ENCODE measurements at regions of chr7 and their contacts with region 1.

Region 1: DNA sequence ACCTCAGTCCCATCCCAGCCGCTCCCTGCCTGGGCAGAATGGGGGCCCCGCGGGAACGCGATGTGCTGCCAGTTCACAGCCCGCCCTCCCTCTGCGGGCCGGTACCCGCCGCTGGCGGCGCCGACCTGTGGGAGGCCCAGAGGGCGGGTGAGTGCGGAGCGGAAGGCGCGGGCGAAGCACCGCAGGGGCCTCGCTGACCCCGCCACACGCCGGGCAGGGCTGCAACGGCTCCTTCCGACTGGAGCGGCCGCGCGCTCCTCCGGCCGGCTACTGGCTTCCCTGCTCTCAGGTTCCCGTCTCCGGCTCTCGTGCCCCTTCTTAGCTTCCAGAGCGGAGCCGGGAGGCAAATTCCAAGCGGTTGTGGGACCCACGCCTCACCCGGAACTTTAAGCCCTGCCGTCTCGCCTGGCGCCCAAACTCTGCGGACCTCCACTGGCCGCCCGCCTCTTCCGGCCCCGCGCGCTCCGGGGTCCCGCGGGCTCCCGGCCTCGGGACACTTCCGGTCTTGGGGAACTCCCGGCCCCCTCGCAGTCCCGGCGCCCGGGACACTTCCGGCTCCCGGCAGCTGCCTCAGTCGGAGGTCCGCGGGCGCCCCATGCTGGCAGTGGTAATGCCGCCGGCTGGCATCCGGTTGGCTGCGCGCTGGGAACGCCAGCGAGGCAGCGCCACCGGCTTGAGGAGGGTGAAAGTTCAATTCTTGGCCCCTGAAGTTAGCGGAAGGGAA is at the start of gene CYREN:
- DNase-seq: peak; percentile 95 to 97 (median 96)
- H3K4me3 ChIP-seq: peak within 1 kb of the TSS; percentile 5 to 78 (median 56)
- H3K27ac ChIP-seq: peak within 1 kb of the TSS; percentile 77 to 97 (median 91)
- H3K4me1 ChIP-seq: peaks cover 0 to 30% of the 10 kb centered on the region in 2 donors
- H3K27me3 ChIP-seq: no peaks in the 10 kb centered on the region
- CTCF ChIP-seq: peak; percentile 54 to 82 (median 65)
- POLR2A ChIP-seq: peak; percentile 34 to 83
- total RNA-seq, gene CYREN: 35.0 to 66.2 (median 51.6) TPM

Region 2: DNA sequence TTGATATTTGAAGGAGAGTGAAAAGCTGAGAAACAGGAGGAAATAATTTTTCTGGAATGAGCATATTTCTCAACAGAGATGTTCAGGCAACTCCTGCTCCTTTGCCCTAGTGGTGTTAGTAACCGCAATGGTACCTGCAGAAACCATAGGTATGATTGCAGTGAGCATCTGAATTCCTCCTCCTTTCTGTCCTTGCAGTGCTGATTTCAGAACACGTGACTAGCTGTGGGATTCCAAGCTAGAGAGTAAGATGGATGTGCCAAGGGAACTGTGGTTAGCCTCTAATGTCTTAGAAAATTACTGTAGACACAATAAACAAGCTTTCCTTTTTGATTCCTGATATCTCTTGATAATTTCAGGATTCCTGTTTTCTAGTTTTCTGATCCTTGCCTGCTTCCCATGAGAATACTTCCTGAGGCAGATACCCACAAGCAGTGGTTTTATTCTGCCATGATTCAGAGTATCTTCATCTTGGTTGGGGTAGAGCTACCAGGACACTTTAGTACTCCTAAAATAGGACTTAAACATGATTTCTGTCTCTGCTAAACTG is 1015.8 kb before region 1 on chr7:
- intact Hi-C with region 1: no loop called
- DNase-seq: no peak
- H3K4me3 ChIP-seq: no peak overlapping the region
- H3K27ac ChIP-seq: no peak overlapping the region
- H3K4me1 ChIP-seq: no peaks in the 10 kb centered on the region
- H3K27me3 ChIP-seq: no peaks in the 10 kb centered on the region
- CTCF ChIP-seq: no peak
- POLR2A ChIP-seq: no peak

Region 3: GRCh38 chr7:134986363-134987251 is 183.8 kb before region 1 on chr7 and contains the start of gene AGBL3:
- intact Hi-C with region 1: loop called (anchors 10 kb)
- DNase-seq: peak; percentile 96 to 99 (median 97)
- H3K4me3 ChIP-seq: peak within 1 kb of the TSS; percentile 31 to 78 (median 56)
- H3K27ac ChIP-seq: peak within 1 kb of the TSS; percentile 36 to 90 (median 78)
- H3K4me1 ChIP-seq: peaks cover 0 to 19% of the 10 kb centered on the region in 2 donors
- H3K27me3 ChIP-seq: no peaks in the 10 kb centered on the region
- CTCF ChIP-seq: peak; percentile 15 to 70 (median 58)
- POLR2A ChIP-seq: peak in 1 of 2 donors; percentile 67
- total RNA-seq, gene AGBL3: 0.28 to 7.3 (median 2.0) TPM

Region 4: DNA sequence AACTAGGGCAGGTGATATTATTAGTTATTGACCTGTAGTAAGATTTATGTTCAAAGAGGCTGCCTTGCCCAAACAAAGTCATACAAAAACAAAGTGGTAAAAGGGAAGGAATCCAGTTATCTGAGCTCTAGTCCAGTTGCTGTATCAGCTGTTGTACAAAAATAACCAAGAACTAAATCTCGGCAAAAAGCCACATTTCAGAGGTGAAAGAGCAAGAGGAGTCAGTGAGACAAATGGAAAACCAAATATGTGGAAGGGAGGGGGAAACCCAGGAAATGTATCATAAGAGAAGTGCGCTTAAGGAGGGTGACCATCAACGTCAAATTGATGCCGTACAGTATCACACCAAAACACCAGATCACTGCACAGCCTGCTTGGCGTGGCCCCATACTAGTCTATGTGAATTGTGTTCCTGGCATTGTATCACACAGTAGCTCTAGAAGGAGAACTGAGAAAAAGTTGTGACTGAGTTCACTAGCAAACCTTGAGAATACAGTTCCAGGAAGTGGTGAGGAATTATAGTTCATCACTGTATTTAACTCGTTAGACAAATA is 177.7 kb before region 1 on chr7:
- intact Hi-C with region 1: loop called (anchors 10 kb)
- DNase-seq: no peak
- H3K4me3 ChIP-seq: no peak overlapping the region
- H3K27ac ChIP-seq: peak overlapping the region in 1 of 5 donors; percentile 72
- H3K4me1 ChIP-seq: peaks cover 0 to 15% of the 10 kb centered on the region in 2 donors
- H3K27me3 ChIP-seq: no peaks in the 10 kb centered on the region
- CTCF ChIP-seq: no peak
- POLR2A ChIP-seq: no peak